Breast epithelium (tissue), 4 donors: ENCODE measurements at regions of chr1 and their contacts with region 1.

Region 1: DNA sequence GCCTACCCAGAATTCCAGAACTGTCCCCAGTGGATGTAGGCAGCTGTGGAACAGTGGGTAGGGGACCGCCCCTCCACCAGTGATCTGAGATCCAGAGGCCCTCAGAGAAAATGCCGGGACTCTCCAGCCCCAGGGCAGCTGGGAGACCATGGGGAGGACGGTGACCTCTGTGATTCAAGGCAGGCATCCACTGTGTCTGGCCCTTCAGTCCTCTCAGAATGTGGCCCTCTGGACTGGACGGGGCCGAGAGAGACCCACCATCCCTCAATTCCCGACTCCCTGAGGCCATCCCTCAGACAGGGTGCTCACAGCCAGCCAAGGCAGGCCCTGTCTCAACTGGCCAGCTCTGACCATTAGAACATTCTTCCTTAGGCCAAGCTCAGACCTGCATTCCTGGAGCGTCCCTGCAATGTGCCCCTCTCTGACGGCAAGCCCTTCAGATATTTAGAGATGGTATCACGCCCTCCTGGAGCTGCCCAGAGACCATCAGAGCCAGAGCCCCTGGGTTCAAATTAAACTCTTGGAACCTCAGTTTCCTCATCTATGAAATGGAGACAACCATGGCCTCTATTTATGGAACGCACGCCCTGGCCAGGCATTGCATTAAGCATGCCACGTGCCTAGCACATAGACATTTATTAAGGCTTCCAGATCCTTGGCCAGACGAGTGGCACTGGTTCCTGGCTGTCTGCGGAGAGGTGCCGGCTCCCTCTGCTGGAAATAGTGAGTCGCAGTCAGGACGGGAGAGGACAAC is 9.6 kb upstream of the EPS8L3 start:
- DNase-seq: peak; percentile 80 to 81
- H3K4me3 ChIP-seq: no peak overlapping the region
- H3K27ac ChIP-seq: no peak overlapping the region
- H3K4me1 ChIP-seq: no peaks in the 10 kb centered on the region
- H3K27me3 ChIP-seq: no peaks in the 10 kb centered on the region
- CTCF ChIP-seq: peak; percentile 72 to 91 (median 87)
- POLR2A ChIP-seq: no peak

Region 2: DNA sequence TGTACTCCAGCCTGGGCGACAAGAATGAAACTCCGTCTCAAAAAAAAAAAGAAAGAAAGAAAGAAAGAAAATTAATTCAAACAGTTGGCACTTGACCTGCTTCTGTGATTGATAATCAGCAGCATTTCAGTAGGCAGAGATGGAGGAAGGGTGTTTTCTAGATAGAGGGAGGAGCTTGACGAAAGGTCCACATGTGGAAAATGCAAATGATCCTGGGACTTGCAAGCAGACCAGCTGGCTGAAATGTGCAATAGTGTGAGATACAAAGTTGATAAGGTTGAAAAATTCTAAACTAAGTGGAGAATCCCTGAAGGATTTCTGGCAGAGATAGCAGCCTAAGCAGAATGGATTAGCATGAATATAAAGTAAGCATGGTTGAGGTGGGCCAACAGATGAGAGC is 655.2 kb before region 1 on chr1:
- intact Hi-C with region 1: no loop called
- DNase-seq: no peak
- H3K4me3 ChIP-seq: no peak overlapping the region
- H3K27ac ChIP-seq: peak overlapping the region; percentile 52 to 71
- H3K4me1 ChIP-seq: peaks cover 6% of the 10 kb centered on the region in 2 donors
- H3K27me3 ChIP-seq: no peaks in the 10 kb centered on the region
- CTCF ChIP-seq: no peak
- POLR2A ChIP-seq: no peak

Region 3: GRCh38 chr1:109619576-109620433 is 153.5 kb before region 1 on chr1 and contains the starts of genes AMPD2 and GNAT2:
- intact Hi-C with region 1: no loop called
- DNase-seq: peak; percentile 66 to 71
- H3K4me3 ChIP-seq: peak within 1 kb of the TSS; percentile 70 to 79 (median 76)
- H3K27ac ChIP-seq: peak within 1 kb of the TSS; percentile 85 to 89
- H3K4me1 ChIP-seq: peaks cover 0 to 15% of the 10 kb centered on the region in 2 donors
- H3K27me3 ChIP-seq: no peaks in the 10 kb centered on the region
- CTCF ChIP-seq: no peak
- POLR2A ChIP-seq: peak; percentile 30
- total RNA-seq, gene AMPD2: 21.3 to 68.2 (median 47.4) TPM
- total RNA-seq, gene GNAT2: not detected

Region 4: DNA sequence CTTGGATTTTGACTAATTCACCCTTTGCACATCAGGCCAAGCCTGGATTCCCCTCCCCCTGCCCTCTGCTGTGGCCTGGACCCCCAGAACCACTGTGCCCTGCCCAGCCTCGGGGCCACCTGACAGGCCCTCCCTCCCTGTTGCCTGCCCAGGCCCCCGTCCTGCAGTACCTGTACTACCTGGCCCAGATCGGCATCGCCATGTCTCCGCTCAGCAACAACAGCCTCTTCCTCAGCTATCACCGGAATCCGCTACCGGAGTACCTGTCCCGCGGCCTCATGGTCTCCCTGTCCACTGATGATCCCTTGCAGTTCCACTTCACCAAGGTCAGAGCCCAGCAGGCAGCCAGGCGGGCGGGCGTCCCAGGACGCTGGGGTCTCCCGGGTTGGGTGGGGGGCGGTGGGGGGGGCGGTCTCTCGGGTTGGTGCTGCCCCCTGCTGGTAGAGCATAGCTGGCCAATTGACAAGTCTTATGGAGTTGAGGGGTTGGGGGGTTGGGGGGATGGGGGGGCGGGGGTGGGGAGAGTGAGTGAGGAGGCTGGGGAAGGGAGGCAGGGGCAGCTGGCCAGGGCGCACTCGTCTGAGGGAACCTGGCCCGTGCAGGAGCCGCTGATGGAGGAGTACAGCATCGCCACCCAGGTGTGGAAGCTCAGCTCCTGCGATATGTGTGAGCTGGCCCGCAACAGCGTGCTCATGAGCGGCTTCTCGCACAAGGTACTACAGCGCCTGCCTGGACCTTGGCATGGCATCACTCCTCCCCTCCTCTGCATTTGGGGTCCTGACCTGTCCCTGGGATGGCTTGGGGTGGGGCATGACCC is 143.0 kb before region 1 on chr1:
- intact Hi-C with region 1: loop called (anchors 10 kb)
- DNase-seq: no peak
- H3K4me3 ChIP-seq: no peak overlapping the region
- H3K27ac ChIP-seq: no peak overlapping the region
- H3K4me1 ChIP-seq: no peaks in the 10 kb centered on the region
- H3K27me3 ChIP-seq: no peaks in the 10 kb centered on the region
- CTCF ChIP-seq: no peak
- POLR2A ChIP-seq: no peak

Region 5: DNA sequence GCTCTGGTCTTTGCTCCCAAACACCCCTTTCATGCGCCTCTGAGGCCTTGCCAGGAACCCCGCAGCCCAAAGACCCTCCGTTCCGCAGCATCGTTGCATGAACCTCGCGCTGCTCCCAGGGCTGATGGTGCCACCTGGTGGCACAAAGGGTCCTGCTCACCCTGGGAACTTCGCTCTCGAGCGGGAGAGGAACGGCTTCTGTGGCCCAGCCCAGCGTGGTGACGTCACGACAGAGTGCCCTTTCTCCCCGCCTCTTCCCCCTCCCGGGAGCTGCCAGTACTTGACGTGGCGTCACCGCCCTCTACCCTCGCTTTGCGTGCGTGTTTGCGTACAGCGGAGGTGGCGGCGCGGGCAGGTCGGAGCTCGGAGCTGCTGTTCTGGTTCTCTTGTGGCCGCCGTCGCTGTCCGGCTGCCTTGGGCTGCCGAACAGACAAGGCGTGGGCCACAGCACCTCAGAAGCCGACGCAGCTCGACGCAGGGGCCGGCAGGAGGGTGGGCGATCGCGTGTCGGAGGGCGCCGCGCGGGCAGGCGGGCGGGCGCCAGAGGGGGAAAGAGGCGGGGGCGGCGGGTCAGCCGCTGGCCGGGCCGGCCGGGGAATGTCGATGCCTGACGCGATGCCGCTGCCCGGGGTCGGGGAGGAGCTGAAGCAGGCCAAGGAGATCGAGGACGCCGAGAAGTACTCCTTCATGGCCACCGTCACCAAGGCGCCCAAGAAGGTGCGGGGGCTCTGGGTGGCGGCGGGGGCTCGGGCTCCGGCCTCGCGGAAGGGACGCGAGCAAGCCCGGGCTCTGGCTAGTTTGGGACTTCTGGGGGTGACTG is 211.3 kb after region 1 on chr1 and contains the start of gene AHCYL1:
- intact Hi-C with region 1: loop called (anchors 2 kb)
- DNase-seq: peak; percentile 99 to 100
- H3K4me3 ChIP-seq: peak within 1 kb of the TSS; percentile 68 to 88 (median 85)
- H3K27ac ChIP-seq: peak within 1 kb of the TSS; percentile 95 to 97
- H3K4me1 ChIP-seq: peaks cover 0 to 25% of the 10 kb centered on the region in 2 donors
- H3K27me3 ChIP-seq: no peaks in the 10 kb centered on the region
- CTCF ChIP-seq: peak; percentile 97 to 100 (median 99)
- POLR2A ChIP-seq: peak; percentile 98
- total RNA-seq, gene AHCYL1: 67.7 to 75.1 (median 73.8) TPM